ENCODE measurements at regions of chr9 and their contacts with region 1.

Region 1: DNA sequence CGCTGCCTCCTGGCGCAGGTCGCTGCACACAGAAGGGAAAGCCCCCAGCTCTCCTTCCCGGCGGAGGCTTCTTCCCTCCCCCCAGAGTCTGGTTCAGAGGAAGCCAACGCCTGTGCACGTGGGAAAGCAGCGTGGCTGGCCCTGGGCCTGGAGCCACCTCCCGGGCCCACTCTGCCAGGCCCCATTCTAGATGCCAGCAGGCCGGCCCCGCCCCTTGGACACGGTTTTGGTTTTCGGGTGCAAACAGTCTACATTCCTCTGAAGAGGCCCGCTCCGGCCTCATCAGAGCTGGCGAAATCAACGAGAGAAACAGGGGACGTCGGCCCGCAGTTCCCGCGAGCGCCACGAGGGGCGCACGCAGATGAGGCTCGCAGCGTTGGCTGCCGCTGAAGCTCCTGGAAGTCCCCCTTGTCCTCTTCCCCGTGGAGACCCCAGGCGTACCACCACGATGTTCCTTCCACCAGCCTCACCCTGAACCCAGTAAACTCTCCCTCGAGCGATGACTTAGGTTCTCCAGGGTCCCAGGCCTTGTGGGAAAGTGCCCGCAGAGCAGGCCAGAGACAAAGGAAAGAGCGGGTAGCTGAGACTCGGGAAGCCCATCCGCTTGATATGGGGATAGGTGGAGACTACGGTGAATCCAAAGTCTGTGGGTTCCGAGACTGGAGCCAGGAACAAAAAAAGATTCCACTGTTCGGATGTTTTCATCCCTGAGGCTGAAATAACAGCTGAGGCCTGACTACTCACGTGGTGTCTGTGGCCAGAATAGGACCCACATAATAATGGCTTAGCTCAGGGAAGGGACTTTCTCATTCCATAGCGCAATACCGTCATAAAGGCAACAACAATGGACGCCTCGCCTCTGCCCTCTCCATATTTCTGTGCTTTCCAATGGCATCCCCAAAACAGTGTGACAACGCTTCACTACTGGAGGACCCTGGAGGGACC is 64.2 kb downstream of the KLF4 start:
- DNase-seq: peak; percentile 59
- ATAC-seq: peak; percentile 84
- H3K4me3 Mint-ChIP-seq: no peak overlapping the region
- H3K27ac Mint-ChIP-seq: no peak overlapping the region
- H3K4me1 Mint-ChIP-seq: peaks cover 7% of the 10 kb centered on the region
- H3K27me3 Mint-ChIP-seq: no peaks in the 10 kb centered on the region

Region 2: GRCh38 chr9:107274953-107275422 is 150.4 kb before region 1 on chr9:
- CTCF ChIA-PET with region 1: no interaction called
- POLR2A ChIA-PET with region 1: no interaction called
- DNase-seq: no peak
- ATAC-seq: no peak
- H3K4me3 Mint-ChIP-seq: no peak overlapping the region
- H3K27ac Mint-ChIP-seq: no peak overlapping the region
- H3K4me1 Mint-ChIP-seq: peaks cover 2% of the 10 kb centered on the region
- H3K27me3 Mint-ChIP-seq: peaks cover 26% of the 10 kb centered on the region

Region 3: DNA sequence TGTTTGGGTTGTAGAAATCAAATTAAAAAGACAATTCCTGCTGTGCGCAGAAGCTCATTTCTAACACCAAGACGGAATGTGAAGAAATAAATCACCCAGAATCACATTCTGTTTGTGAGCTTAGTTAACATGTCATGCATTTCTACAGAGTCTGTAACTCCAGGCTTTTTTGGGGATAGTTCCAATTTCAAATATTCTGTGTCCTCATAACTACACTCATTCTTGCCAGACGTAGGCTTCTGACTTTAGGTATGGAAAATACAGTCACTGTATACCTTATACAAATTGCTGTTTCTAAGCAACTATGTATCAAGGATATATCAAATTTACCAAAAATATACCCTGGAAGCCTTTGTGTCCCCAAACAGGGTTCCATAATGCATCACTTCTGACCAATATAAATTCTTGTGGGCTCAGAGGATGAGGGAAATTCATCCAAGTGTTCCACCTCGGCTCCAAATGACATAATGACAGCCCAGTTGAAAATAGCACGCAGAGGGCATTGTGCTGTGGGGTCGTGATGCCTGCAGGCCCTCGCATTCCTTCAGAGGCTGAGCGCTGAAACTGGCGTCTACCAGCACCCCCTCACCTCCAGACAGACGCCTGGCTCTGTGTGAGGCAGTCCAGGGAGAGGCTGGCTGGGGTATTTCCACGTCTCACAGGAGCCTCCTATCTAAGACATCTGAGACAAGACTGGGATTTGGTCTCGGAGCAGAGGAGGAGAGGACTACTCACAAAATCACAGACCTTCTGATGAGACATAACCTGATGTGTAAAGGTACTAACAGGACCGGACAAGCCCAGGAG is 15.6 kb before region 1 on chr9:
- CTCF ChIA-PET with region 1: interaction called, 12 read pairs
- POLR2A ChIA-PET with region 1: no interaction called
- DNase-seq: no peak
- ATAC-seq: no peak
- H3K4me3 Mint-ChIP-seq: no peak overlapping the region
- H3K27ac Mint-ChIP-seq: no peak overlapping the region
- H3K4me1 Mint-ChIP-seq: no peaks in the 10 kb centered on the region
- H3K27me3 Mint-ChIP-seq: no peaks in the 10 kb centered on the region

Region 4: DNA sequence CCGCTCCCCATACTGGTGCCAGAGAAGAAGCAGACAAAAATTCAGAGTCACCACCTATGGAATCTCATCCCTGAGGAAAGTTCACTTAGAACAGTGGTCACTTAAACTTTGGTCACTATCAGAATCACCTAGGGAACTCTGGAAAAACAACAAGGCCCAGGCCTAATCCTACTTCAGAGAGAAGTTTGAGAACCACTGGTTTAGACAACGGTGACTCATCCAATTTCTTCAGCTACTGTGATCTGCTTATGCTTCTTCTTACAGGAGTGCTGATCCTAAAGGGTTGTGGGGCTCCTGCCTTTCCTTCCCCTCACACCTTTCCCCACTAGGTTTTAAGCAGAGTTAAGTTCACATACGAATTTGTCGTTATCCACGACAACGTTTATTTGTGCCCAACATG is 258.9 kb after region 1 on chr9:
- CTCF ChIA-PET with region 1: no interaction called
- POLR2A ChIA-PET with region 1: no interaction called
- DNase-seq: no peak
- ATAC-seq: no peak
- H3K4me3 Mint-ChIP-seq: no peak overlapping the region
- H3K27ac Mint-ChIP-seq: no peak overlapping the region
- H3K4me1 Mint-ChIP-seq: no peaks in the 10 kb centered on the region
- H3K27me3 Mint-ChIP-seq: no peaks in the 10 kb centered on the region

Region 5: DNA sequence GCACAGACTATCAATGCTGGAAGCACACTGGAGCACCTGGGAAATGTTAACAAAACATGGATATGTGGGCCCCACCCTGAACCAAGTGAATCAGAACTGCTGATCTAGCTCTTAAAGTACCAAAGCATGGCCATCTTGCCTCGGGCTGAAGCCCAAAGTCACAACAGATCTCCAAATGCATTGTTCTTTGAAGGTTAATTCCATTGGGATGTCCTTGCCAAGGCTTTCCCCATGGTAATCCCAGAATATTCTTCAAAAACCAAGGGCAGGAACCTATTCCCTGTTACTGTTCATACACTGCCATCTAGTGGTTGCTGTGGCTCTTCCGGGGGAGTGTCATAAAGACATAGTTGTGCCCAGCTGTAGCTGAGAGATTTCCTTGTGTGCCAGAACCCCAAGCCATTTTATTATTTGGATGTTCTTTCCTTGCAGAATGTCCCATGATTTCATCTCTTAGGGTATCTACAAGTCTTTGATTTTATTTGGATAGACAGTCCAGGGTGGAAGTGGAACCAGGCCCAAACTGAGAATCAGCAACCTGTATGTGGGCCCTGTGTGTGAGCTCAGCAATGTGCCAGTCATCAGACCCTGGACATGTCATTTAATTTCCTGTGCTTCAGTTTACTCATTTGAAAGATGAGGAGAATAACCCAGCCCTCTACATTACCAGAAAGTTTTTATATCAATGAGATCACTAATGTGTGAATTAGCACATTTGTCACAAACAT is 1140.4 kb after region 1 on chr9:
- CTCF ChIA-PET with region 1: interaction called, 11 read pairs
- POLR2A ChIA-PET with region 1: no interaction called
- DNase-seq: peak; percentile 26
- ATAC-seq: no peak
- H3K4me3 Mint-ChIP-seq: no peak overlapping the region
- H3K27ac Mint-ChIP-seq: no peak overlapping the region
- H3K4me1 Mint-ChIP-seq: no peaks in the 10 kb centered on the region
- H3K27me3 Mint-ChIP-seq: no peaks in the 10 kb centered on the region

Measured in activated CD8-positive, alpha-beta T cell treated with anti-CD3 and anti-CD28 coated beads, Interleukin-2, amount 10 ng/mL, durations not matched to agents 7 days and 5 days (primary cell).